GM10248 (cell line): ENCODE measurements at regions of chr1 and their contacts with region 1.

Region 1: DNA sequence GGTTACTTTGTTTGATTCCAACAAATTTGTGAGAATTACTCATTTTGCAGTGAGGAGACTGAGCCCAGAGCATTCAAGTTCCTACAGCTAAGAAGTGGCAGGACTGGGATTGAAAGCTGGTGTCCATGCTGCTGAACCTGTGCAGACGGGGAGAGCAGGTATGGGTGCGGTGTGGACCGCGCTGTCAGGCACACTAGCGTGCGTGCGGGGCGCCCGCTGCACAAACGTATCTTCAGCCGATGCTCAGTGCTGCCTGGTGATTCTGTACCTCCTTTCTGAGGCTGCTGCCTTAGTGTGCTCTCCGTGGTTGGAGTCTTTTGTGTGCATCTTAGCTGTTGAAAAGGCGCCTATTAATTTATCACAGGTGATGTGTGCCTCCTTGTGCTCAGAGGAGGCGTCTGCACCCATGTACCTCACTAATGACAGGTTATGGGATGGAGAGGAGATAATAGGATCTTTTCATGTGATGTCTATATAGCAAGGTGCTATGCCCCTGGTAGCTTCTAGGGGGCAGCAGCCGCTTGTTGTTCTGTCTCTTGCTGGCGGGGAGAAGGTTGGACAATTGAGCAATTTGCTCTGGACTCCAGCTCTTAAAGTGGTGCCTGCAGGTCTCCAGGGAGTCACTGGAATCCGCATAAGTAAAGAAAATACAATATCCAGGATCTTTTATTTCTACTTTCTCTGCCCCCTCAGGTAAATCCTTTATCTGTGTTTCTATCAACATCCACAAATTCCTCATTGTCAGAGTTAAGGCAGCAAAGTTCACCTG is 32.5 kb downstream of the PEX14 start:
- DNase-seq: peak; percentile 74
- CTCF ChIP-seq: peak; percentile 80

Region 2: DNA sequence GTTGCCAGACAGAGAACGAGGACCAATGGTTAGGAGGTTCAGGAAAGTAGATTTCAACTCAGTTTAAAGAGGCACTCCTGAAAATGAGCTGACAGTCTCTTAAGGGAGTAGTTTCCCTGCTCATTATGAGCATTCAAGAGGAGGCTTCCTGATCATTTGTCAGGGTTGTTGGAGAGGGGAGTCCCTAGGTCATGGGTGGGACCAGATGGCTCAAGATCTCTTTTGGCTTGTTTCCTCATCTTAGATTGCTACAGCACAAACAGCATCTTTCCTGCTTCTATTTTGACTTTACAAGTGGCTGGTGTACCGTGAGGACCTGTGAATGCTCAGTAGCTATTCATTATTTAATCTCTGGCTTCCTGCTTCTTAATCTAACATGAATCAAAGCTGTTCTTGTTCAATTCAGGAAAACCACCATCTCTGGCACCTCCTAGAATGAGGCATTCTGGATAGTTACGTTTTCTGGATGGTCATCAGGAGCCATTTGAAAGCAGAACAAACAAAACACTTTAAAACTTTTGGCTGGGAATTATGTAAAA is 15.1 kb after region 1 on chr1:
- CTCF ChIA-PET with region 1: interaction called, 19 read pairs
- POLR2A ChIA-PET with region 1: no interaction called
- DNase-seq: no peak
- CTCF ChIP-seq: no peak

Region 3: DNA sequence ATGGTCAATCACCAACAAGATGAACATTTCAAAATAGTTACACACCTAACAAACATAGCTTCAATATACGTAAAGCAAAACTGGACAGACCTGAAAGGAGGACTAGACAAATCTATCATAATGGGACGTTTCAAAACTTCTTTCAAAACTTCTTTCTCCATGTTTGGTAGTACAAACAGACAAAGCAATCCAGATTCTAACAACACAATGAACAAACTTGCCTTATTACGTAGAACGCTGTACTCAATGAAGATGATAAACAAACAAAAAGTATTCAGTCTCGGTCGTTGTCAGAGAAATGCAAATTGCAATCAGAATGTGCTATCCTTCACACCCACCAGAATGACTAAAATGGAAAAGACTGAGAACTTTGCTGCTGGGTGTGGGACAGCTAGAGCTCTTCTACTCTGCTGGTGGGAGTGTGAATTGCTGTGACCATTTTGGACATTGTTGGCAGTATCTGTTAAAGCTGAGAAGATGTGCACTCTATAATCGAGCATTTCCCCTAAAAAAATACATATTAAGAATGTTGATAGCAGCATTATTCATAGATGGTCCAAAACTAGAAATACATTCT is 78.7 kb after region 1 on chr1:
- CTCF ChIA-PET with region 1: no interaction called
- POLR2A ChIA-PET with region 1: no interaction called
- DNase-seq: no peak
- CTCF ChIP-seq: no peak

Region 4: DNA sequence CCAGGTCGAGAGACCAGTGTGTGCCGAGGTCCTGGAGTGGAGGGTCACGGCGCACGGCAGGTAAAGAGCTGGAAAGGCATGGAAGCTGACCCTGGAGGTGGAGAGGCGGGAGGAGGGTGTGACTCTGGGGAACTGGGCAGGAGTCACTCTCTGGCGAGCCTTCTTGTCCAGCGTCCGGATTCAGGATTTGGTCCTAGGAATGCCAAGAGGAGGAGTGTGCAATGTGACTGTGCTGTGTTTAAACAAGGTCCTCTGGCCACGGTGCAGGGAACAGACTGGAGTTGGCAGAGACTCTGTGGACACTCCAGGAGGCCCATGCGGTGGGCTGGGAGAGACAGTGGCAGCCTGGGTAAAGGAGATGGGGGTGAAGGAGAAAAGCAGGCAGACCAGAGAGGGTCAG is 353.4 kb after region 1 on chr1:
- CTCF ChIA-PET with region 1: interaction called, 15 read pairs
- POLR2A ChIA-PET with region 1: no interaction called
- DNase-seq: no peak
- CTCF ChIP-seq: no peak

Region 5: GRCh38 chr1:10867138-10867721 is 359.9 kb after region 1 on chr1:
- CTCF ChIA-PET with region 1: interaction called, 18 read pairs
- POLR2A ChIA-PET with region 1: no interaction called
- DNase-seq: peak; percentile 82
- CTCF ChIP-seq: peak; percentile 64

Region 6: DNA sequence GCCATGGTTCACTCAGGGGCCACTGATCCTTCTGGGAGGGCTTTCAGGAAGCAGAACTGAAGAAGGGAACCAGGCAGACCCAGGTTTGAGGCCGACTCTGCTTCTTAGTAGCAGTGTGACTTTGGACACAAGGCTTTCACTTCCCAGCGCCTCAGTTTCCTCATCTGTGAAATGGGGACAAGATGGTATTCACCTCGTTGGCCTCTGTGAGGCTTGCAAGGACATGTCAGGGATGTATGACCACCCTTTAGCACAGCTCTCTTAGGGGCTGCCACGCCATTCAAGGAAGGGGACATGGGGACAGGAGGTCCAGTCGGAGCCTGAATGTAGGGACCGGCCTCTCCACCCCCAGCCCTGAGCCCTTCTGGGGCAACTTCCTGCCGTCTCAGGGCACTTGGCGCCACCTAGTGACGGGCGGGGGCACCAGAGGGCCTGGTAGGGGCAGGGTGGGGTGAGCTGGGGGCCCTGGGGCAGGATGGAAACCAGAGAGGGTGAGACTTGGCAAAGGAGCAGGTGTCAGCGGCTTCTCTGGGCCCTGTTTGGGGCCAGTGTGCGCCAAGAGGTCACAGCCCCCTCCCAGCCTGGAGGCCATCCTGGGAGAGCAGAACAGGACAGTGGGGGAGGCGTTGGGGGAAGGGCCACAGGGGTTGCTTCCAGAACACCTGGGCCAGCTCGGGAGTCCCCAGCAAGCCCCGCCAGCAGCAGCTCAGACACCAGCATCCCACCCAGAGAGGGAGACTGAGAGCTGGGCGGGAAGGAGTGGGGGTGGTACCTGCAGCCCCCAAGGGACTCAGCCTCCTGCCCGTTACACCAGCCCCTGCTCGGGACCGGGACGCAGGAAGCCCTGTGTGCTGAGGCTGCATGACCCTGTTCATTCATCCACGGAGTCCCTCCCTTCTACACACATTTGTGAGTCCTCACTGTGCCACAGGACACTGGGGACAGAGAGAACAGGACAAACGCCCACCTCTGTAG is 402.7 kb after region 1 on chr1:
- CTCF ChIA-PET with region 1: interaction called, 22 read pairs
- POLR2A ChIA-PET with region 1: no interaction called
- DNase-seq: peak; percentile 81
- CTCF ChIP-seq: peak; percentile 42